ENCODE measurements at regions of chr19 and their contacts with region 1.

Region 1: DNA sequence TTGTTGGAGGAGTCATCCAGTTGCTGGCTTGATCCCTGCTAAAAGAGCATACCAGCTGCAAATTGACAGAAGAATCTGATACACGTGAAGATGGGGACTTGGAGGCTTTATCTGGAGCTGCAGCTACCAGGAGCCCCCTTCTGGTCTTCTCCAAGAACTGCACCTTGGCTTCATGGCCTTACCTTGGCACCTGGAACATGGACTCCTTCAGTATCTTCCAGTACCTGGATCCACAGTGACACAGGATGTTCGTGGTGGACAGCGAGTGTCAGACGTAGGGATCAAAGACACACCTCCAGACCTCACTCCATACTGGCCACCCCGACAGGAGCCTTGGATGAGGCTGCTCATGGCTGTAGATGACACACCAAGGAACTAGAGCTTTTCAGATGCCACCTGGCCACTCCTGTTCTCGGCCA is 9.9 kb upstream of the ACSBG2 start:
- DNase-seq: peak in 1 of 4 donors; percentile 52
- ATAC-seq: peak; percentile 97
- H3K4me3 ChIP-seq: no peak overlapping the region
- H3K27ac ChIP-seq: no peak overlapping the region
- H3K4me1 ChIP-seq: no peaks in the 10 kb centered on the region
- H3K27me3 ChIP-seq: no peaks in the 10 kb centered on the region
- CTCF ChIP-seq: peak; percentile 80 to 93

Region 2: DNA sequence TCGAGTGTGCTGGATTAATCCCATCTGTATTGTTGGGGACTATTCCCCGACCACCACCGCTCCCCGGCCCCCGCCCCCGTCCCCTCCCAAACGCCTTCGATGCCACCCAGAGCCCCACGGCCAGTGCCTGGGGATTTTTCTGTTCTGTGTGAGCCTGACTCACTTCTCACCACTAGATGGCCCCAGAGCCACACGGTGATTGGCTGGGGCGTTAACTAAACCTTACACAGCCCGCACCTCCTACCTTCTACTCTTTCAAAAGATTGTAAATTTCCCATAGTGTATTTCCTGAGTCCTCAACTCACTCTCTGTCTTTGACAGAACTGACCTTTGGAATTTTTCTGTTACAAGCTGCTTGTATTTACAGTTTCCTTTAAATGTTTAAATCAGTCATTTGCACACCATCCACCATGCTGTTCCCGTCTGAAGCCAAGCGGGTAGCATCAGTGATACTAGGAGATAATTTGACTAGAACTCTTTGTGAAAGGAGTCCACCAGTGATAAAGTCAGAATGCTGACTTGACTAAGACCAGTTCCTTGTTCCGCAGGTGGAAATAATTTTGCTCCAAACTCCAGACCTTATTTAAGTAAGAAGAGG is 76.7 kb before region 1 on chr19:
- intact Hi-C with region 1: loop called (anchors 2 to 10 kb)
- DNase-seq: peak; percentile 76 to 90 (median 82)
- ATAC-seq: peak; percentile 98
- H3K4me3 ChIP-seq: no peak overlapping the region
- H3K27ac ChIP-seq: no peak overlapping the region
- H3K4me1 ChIP-seq: peaks cover 11 to 21% of the 10 kb centered on the region in 2 donors
- H3K27me3 ChIP-seq: no peaks in the 10 kb centered on the region
- CTCF ChIP-seq: peak; percentile 83 to 89

Region 3: DNA sequence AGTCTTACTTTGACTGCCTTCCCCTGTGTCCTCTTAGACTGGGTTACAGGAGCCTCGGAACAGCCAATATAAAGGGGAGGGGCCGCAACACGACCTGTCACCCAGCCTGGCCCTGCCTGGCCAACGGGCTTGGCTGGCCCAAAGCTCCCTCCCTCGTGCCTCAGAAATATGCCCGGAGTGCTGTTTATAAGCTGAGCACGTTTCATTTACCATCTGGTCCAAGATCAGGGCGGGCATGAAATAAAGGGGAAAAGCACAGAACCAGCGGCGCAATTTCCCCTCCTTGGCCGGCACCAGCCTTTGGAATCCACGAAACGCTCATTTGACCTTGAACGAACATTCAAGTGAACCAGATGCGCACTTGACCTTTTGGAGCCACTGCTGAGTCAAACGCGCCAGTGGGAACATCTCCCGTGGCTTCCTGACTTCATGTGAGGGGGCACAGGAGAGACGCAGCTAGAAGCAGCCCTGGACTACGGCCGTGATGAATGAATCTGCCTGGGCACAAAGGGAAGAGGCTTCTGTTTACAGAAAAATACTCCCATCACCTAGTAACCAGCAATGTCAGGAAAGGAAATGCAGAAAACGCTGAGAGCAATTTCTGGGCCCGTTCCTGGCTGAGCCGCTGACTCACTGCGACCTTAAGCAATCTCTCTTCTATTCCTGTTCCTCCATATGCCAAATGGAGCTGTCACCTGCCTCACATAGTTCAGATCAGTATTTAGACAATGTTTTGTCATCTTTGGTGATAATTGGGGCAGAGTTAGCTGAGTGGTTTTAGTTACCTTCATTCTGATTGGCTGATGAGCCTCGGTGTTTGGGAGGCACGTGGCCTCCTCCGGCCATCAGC is 68.6 kb before region 1 on chr19:
- intact Hi-C with region 1: loop called in 1 of 2 experiments (anchors 10 kb)
- DNase-seq: peak; percentile 51 to 82 (median 78)
- ATAC-seq: peak; percentile 80
- H3K4me3 ChIP-seq: no peak overlapping the region
- H3K27ac ChIP-seq: peak overlapping the region; percentile 94 to 99
- H3K4me1 ChIP-seq: peaks cover 43 to 63% of the 10 kb centered on the region in 2 donors
- H3K27me3 ChIP-seq: no peaks in the 10 kb centered on the region
- CTCF ChIP-seq: no peak